ENCODE measurements at regions of chr11 and their contacts with region 1.

Region 1: GRCh38 chr11:72642884-72643511 is 31.2 kb downstream of the PDE2A start:
- DNase-seq: peak; percentile 92
- H3K4me3 Mint-ChIP-seq: peak overlapping the region; percentile 63
- H3K27ac Mint-ChIP-seq: no peak overlapping the region
- H3K4me1 Mint-ChIP-seq: no peaks in the 10 kb centered on the region
- H3K27me3 Mint-ChIP-seq: peaks cover 7% of the 10 kb centered on the region

Region 2: DNA sequence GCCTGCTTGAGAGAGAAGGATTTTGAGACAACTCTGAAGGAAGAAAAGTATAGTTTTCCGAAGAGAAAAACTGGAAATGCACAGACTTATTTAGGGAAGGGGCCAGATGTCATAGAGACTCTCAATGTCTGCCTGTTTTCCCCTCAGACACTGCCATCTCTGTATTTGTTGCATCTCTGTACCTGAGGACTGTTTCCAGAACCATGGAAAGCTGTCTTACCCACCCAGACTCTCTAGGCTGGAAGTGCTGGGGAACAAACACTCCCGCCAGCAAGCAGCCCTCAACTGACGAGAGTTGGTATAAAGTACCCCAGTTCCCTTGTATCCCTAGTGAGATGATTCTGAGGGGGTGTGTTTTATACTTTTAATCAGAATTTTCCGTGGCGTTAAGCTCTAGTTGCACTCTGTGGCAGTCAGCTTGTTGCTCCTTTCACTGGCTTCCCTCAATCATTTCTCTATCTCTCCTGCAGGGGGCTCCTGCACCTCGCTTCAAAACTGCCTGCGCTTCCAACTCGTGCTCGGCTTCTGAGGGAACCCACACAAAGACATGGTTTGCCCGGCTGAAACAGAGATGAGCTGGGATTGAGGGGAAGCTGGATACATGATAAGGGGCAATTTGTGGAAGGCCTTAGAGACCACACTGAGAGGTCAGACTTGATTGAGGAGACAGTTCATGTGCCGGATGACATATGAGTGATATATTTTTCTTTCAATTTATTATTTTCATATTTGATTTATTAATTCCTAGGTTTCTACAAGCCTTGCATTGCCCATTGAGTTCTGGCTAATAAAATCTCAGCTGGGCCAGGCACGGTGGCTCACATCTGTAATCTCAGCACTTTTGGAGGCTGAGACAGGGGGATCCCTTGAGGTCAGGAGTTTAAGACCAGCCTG is 171.7 kb before region 1 on chr11:
- intact Hi-C with region 1: loop called (anchors 1 kb)
- DNase-seq: peak; percentile 89
- H3K4me3 Mint-ChIP-seq: peak overlapping the region; percentile 22
- H3K27ac Mint-ChIP-seq: no peak overlapping the region
- H3K4me1 Mint-ChIP-seq: peaks cover 2% of the 10 kb centered on the region
- H3K27me3 Mint-ChIP-seq: peaks cover 55% of the 10 kb centered on the region

Region 3: DNA sequence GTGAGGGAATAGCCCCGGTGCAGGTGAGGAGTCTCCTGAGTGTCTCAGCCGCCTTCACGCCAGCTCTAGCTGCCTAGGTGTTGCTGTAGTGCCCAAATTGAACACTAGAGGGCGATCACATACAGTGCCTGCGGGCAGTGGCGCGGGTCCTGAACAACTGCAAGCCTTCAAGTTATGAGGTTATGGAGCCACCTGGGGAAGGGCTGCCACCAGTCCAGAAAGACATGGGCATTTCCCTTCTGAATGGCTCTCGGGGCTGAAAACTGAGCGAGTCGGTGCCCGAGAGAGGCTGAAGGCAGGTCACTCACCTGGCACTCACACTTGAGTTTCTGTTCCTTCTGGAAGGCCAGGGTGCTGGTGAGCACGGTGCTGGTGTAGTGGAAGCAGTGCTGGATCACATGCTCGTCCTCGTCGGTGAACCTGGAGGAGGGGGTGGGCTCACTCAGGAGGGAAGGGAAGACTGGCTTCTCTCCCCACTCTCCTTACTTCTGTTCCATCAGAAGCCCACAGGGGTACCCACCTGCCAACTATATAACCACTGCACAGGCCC is 57.2 kb before region 1 on chr11:
- intact Hi-C with region 1: loop called (anchors 1 kb)
- DNase-seq: peak; percentile 92
- H3K4me3 Mint-ChIP-seq: peak overlapping the region; percentile 70
- H3K27ac Mint-ChIP-seq: no peak overlapping the region
- H3K4me1 Mint-ChIP-seq: peaks cover 28% of the 10 kb centered on the region
- H3K27me3 Mint-ChIP-seq: peaks cover 55% of the 10 kb centered on the region

Measured in activated CD4-positive, alpha-beta T cell treated with anti-CD3 and anti-CD28 coated beads, Interleukin-2, amount 10 ng/mL, durations not matched to agents 24 days and 14 days (primary cell).